PC-9 (cell line): ENCODE measurements at regions of chr4 and their contacts with region 1.

Region 1: GRCh38 chr4:105471566-105472176 is 2.2 kb downstream of the PPA2 start:
- DNase-seq: peak; percentile 41 to 42
- H3K4me3 ChIP-seq: peak overlapping the region; percentile 81
- H3K27ac ChIP-seq: 0 out of 2 replicates have a peak overlapping the region, but pooled peaks have one; percentile 23
- H3K4me1 ChIP-seq: peaks cover 16% of the 10 kb centered on the region
- H3K27me3 ChIP-seq: no peaks in the 10 kb centered on the region
- CTCF ChIP-seq: peak; percentile 69

Region 2: DNA sequence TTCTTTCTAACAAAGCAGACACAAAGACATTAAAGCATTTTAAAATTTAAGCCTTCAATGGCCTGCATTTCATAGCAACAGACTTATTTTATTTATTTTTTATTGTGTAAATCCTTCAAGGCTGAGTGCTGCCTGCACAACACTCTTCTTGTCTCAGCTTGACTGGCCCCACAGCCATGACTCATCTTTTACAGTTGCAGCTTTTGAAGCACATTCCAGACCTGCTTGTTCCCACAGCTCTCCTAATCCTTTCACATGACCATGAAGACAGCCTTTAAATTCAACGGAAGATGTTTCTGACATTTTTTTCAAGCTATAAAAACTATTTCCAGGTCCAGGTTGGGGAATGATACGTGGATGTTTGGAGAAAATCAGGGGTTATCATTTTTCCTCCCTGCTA is 1475.0 kb before region 1 on chr4:
- CTCF ChIA-PET with region 1: no interaction called
- POLR2A ChIA-PET with region 1: interaction called, 5 read pairs
- intact Hi-C with region 1: loop called (anchors 5 kb)
- DNase-seq: peak; percentile 50
- H3K4me3 ChIP-seq: no peak overlapping the region
- H3K27ac ChIP-seq: no peak overlapping the region
- H3K4me1 ChIP-seq: no peaks in the 10 kb centered on the region
- H3K27me3 ChIP-seq: no peaks in the 10 kb centered on the region
- CTCF ChIP-seq: no peak

Region 3: DNA sequence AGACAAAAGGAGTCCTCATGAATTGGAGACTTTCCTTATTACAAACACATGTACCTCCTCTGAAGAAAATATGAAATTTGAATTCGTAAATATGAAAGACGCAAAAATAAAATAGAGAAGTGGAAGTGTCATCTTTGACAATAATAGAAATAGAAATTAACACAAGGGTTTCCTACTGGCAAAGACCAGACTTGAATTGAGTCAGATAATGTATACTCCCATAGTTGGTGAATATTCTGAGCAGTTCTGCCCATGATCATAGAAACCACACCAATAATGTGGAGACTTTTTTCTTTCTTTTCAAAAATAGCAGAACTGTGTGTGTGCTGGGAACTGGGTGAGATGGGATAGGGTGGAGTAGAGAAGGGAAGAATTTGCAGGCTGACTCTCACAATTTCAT is 602.7 kb before region 1 on chr4:
- CTCF ChIA-PET with region 1: no interaction called
- POLR2A ChIA-PET with region 1: no interaction called
- intact Hi-C with region 1: loop called (anchors 5 kb)
- DNase-seq: no peak
- H3K4me3 ChIP-seq: no peak overlapping the region
- H3K27ac ChIP-seq: no peak overlapping the region
- H3K4me1 ChIP-seq: no peaks in the 10 kb centered on the region
- H3K27me3 ChIP-seq: no peaks in the 10 kb centered on the region
- CTCF ChIP-seq: no peak

Region 4: DNA sequence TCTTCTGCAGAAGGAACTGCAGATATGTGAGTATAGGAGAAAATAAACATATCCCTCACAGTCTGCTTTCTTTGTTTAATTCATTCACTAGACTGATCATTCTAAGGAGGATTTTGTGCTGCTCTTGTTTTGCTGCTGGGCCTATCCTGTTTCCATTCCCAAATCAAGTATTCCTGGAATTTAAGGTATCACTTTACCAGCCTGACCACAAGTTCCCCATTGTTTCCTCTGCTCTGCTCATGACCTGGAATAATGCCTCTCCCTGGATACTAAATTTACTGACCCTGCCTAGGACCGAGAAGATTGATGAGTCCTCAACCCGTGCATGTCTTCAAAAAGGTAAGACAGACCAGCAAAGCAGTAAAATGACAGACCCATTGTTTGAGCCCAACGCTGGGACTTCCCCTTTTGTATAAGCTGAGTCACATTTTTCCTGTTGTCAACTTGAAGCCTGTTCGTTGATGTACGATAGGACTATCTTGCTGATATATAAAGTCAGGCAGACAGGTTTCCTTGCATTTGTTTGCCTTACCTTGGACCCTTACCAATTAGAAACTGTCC is 410.5 kb before region 1 on chr4:
- CTCF ChIA-PET with region 1: no interaction called
- POLR2A ChIA-PET with region 1: no interaction called
- intact Hi-C with region 1: loop called (anchors 5 kb)
- DNase-seq: peak; percentile 36 to 53
- H3K4me3 ChIP-seq: no peak overlapping the region
- H3K27ac ChIP-seq: no peak overlapping the region
- H3K4me1 ChIP-seq: peaks cover 17% of the 10 kb centered on the region
- H3K27me3 ChIP-seq: no peaks in the 10 kb centered on the region
- CTCF ChIP-seq: no peak

Region 5: DNA sequence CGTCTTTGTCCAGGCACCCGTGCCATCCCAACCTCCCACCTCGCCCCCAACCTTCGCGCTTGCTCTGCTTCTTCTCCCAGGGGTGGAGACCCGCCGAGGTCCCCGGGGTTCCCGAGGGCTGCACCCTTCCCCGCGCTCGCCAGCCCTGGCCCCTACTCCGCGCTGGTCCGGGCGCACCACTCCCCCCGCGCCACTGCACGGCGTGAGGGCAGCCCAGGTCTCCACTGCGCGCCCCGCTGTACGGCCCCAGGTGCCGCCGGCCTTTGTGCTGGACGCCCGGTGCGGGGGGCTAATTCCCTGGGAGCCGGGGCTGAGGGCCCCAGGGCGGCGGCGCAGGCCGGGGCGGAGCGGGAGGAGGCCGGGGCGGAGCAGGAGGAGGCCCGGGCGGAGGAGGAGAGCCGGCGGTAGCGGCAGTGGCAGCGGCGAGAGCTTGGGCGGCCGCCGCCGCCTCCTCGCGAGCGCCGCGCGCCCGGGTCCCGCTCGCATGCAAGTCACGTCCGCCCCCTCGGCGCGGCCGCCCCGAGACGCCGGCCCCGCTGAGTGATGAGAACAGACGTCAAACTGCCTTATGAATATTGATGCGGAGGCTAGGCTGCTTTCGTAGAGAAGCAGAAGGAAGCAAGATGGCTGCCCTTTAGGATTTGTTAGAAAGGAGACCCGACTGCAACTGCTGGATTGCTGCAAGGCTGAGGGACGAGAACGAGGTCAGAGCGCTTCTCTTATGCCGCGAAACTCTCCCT is 325.2 kb before region 1 on chr4 and contains the start of gene TET2:
- CTCF ChIA-PET with region 1: no interaction called
- POLR2A ChIA-PET with region 1: no interaction called
- intact Hi-C with region 1: loop called (anchors 5 kb)
- DNase-seq: peak; percentile 43 to 55
- H3K4me3 ChIP-seq: peak within 1 kb of the TSS; percentile 97
- H3K27ac ChIP-seq: peak within 1 kb of the TSS; percentile 34; the same call in 1 of the 2 replicates
- H3K4me1 ChIP-seq: peaks cover 19% of the 10 kb centered on the region; the same call in 1 of the 2 replicates
- H3K27me3 ChIP-seq: no peaks in the 10 kb centered on the region
- CTCF ChIP-seq: no peak
- total RNA-seq, gene TET2: 5.2 and 6.6 TPM in 2 replicates

Region 6: GRCh38 chr4:105293360-105293759 is 178.3 kb before region 1 on chr4:
- CTCF ChIA-PET with region 1: interaction called, 14 read pairs
- POLR2A ChIA-PET with region 1: no interaction called
- intact Hi-C with region 1: no loop called
- DNase-seq: no peak
- H3K4me3 ChIP-seq: no peak overlapping the region
- H3K27ac ChIP-seq: no peak overlapping the region
- H3K4me1 ChIP-seq: no peaks in the 10 kb centered on the region
- H3K27me3 ChIP-seq: no peaks in the 10 kb centered on the region
- CTCF ChIP-seq: no peak